ENCODE measurements at regions of chr1 and their contacts with region 1.

Region 1: DNA sequence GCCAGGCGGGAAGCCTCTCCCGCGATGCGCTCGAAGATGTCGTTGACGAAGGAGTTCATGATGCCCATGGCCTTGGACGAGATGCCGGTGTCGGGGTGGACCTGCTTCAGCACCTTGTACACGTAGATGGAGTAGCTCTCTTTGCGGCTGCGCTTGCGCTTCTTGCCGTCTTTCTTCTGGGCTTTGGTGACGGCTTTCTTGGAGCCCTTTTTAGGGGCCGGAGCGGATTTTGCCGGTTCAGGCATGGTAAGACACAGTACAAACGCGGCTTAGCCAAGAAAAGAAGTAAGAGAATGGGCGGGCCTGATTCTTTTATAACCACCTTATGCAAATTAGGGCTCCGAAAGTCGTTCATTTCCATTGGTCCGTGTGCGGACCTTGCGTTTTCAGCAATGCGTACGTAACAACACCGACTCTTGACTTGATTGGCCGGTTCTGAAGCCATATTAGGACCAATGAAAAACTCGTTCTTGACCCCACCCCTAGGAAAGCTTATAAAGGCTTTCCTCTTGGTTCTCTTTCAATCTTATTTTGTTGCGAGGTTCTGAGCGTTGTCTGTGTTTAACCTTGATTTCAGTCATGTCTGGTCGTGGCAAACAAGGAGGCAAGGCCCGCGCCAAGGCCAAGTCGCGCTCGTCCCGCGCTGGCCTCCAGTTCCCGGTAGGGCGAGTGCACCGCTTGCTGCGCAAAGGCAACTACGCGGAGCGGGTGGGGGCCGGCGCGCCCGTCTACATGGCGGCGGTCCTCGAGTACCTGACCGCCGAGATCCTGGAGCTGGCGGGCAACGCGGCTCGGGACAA is 12.8 kb upstream of the BOLA1 start:
- DNase-seq: peak; percentile 88 to 91
- ATAC-seq: peak; percentile 91
- H3K4me3 ChIP-seq: peak overlapping the region; percentile 83 to 89
- H3K27ac ChIP-seq: peak overlapping the region; percentile 98
- H3K4me1 ChIP-seq: peaks cover 0 to 4% of the 10 kb centered on the region in 2 donors
- H3K27me3 ChIP-seq: peaks cover 0 to 2% of the 10 kb centered on the region in 2 donors

Region 2: GRCh38 chr1:149927503-149928387 is 41.1 kb after region 1 on chr1 and contains the start of gene SF3B4:
- intact Hi-C with region 1: loop called in 1 of 2 experiments (anchors 5 kb)
- DNase-seq: peak; percentile 97 to 99
- ATAC-seq: peak; percentile 97
- H3K4me3 ChIP-seq: peak within 1 kb of the TSS; percentile 76 to 92
- H3K27ac ChIP-seq: peak within 1 kb of the TSS; percentile 62 to 84
- H3K4me1 ChIP-seq: peaks cover 0 to 3% of the 10 kb centered on the region in 2 donors
- H3K27me3 ChIP-seq: no peaks in the 10 kb centered on the region
- total RNA-seq, gene SF3B4: 37.3 to 42.6 TPM

Region 3: GRCh38 chr1:149937759-149938158 is 51.2 kb after region 1 on chr1:
- intact Hi-C with region 1: loop called in 1 of 2 experiments (anchors 2 kb)
- DNase-seq: no peak
- ATAC-seq: no peak
- H3K4me3 ChIP-seq: no peak overlapping the region
- H3K27ac ChIP-seq: peak overlapping the region in 1 of 2 donors; percentile 52
- H3K4me1 ChIP-seq: peaks cover 2 to 7% of the 10 kb centered on the region in 2 donors
- H3K27me3 ChIP-seq: no peaks in the 10 kb centered on the region

Region 4: DNA sequence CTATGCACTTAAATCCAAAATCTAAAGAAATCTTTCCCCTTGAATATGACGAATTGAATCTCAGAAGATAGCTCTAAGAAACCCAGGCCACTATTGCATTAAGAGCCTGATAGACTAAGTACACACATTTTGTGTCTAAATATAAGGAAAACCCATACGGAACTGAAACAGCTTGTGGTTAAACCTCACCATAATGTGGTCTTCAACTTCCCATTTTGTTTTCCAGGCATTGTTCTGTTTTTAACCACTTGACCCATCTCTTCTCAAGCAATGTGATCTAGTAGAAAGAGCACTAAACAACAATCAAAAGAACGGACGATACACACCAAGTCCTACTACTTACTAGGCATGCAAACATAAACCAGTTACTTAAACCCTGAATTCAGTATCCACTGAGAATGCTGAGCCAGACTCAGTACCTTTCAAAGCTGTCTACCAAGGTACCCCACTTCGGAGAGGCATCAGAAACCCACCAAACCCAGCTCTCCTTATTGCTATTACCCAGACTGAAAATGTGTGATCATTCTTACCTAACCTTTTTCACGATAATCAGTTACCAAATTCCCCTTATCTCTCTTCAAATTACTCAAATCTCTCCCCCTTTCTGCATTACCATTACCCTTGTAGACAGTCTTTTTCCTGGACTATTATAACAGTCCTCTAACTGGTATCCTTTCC is 111.1 kb after region 1 on chr1:
- intact Hi-C with region 1: no loop called
- DNase-seq: no peak
- ATAC-seq: no peak
- H3K4me3 ChIP-seq: no peak overlapping the region
- H3K27ac ChIP-seq: no peak overlapping the region
- H3K4me1 ChIP-seq: peaks cover 0 to 6% of the 10 kb centered on the region in 2 donors
- H3K27me3 ChIP-seq: no peaks in the 10 kb centered on the region

Region 5: DNA sequence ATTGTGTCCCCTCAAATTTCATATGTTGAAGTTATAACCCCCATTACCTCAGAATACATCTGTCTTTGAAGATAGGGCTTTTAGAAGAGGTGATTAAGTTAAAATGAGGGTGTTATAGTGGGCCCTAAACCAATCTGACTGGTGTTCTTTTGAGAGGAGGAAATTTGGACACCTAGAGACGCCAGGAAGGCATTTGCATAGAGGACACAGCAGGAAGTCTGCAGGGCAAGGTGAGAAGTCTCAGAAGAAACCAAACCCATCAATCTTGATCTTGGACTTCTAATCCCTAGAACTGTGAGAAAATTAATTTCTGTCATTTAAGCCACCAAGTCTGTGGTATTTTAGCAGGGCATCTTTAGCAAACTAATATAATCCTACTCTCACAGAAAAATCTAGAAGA is 797.3 kb after region 1 on chr1:
- intact Hi-C with region 1: no loop called
- DNase-seq: no peak
- ATAC-seq: no peak
- H3K4me3 ChIP-seq: no peak overlapping the region
- H3K27ac ChIP-seq: no peak overlapping the region
- H3K4me1 ChIP-seq: no peaks in the 10 kb centered on the region
- H3K27me3 ChIP-seq: no peaks in the 10 kb centered on the region

Measured in aorta (tissue), 5 donors.